K562 (cell line): ENCODE measurements at regions of chr2 and their contacts with region 1.

Region 1: GRCh38 chr2:227471924-227472264 is at the start of gene AGFG1:
- DNase-seq: peak; percentile 84 to 88 (median 87)
- ATAC-seq: peak; percentile 87
- H3K4me3 ChIP-seq: peak within 1 kb of the TSS; percentile 94
- H3K27ac ChIP-seq: peak within 1 kb of the TSS; percentile 79
- H3K4me1 ChIP-seq: peaks cover 5 to 13% of the 10 kb centered on the region in 2 experiments; a peak in 4 of 5 replicates
- H3K27me3 ChIP-seq: no peaks in the 10 kb centered on the region
- CTCF ChIP-seq: peak; percentile 79 to 88 (median 84)
- EP300 ChIP-seq: no peak
- POLR2A ChIP-seq: 0 out of 2 replicates have a peak, but pooled peaks have one; percentile 29
- RAD21 ChIP-seq: peak; percentile 44 to 50
- polyA plus RNA-seq, gene AGFG1: 11.2 to 14.0 TPM

Region 2: DNA sequence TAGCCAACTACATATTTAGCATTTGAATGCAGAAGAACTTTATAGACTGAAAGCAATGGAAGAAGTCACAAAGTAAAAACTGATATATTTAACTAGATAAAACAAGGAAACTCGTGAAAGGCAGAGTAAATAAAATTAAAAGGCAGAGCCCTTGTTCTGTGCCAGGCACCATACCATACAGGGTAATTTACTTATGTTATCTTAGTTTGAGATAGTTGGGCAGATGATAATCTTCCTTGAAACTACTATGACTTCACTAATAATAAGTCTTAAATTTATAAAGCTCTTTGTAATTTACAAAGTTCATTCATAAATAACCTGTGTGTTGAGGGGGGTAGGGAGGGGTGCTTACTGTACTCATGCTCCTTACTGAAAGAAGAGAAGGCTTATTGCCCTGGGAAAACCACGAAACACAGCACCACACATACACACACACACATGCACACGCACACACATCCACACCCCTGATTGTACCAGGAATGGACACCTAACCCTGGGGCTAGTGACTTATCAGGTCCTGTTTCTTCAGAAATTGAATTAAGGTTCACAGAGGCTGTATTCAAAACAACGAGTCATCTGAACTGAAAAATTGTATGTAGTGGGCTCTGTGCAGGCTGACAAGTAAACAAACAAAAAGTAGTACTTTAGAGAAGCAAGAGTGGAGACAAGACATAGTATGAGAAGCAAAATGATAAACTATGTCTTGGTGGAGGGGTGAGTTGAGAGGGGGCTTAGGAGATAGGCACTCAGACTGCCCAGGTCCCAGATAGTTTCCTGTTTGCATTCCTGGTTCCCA is 38.1 kb after region 1 on chr2:
- CTCF ChIA-PET with region 1: no interaction called
- POLR2A ChIA-PET with region 1: no interaction called
- in situ Hi-C with region 1: no loop called
- intact Hi-C with region 1: loop called (anchors 5 kb)
- DNase-seq: peak in 1 of 4 experiments; percentile 19
- ATAC-seq: peak; percentile 45
- H3K4me3 ChIP-seq: no peak overlapping the region
- H3K27ac ChIP-seq: peak overlapping the region; percentile 61; the same call in 2 of the 3 replicates
- H3K4me1 ChIP-seq: peaks cover 0 to 25% of the 10 kb centered on the region in 2 experiments; a peak in 3 of 5 replicates
- H3K27me3 ChIP-seq: no peaks in the 10 kb centered on the region
- CTCF ChIP-seq: no peak
- EP300 ChIP-seq: no peak
- POLR2A ChIP-seq: no peak
- RAD21 ChIP-seq: no peak

Region 3: DNA sequence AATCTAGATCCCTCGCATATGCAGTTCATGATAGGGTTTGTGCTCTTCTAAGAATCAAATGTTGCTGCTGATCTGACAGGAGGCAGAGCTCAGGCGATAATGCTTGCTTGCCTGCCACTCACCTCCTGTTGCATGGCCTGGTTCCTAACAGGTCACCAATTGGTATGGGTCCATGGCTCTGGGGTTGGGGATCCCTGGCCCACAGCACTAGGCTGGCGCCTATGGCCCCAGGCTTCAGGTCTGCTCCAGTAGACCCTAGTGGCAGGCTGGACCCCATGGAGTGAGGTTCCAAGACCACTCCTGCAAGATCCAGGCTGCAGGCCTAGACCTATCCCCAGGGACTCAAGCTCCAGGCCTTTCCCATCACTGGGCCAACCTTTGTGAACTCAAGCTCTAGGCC is 607.3 kb after region 1 on chr2:
- CTCF ChIA-PET with region 1: no interaction called
- POLR2A ChIA-PET with region 1: no interaction called
- in situ Hi-C with region 1: no loop called
- intact Hi-C with region 1: no loop called
- DNase-seq: no peak
- ATAC-seq: no peak
- H3K4me3 ChIP-seq: no peak overlapping the region
- H3K27ac ChIP-seq: no peak overlapping the region
- H3K4me1 ChIP-seq: no peaks in the 10 kb centered on the region
- H3K27me3 ChIP-seq: no peaks in the 10 kb centered on the region
- CTCF ChIP-seq: no peak
- EP300 ChIP-seq: no peak
- POLR2A ChIP-seq: no peak
- RAD21 ChIP-seq: no peak